HepG2 (cell line): ENCODE measurements at regions of chr9 and their contacts with region 1.

Region 1: DNA sequence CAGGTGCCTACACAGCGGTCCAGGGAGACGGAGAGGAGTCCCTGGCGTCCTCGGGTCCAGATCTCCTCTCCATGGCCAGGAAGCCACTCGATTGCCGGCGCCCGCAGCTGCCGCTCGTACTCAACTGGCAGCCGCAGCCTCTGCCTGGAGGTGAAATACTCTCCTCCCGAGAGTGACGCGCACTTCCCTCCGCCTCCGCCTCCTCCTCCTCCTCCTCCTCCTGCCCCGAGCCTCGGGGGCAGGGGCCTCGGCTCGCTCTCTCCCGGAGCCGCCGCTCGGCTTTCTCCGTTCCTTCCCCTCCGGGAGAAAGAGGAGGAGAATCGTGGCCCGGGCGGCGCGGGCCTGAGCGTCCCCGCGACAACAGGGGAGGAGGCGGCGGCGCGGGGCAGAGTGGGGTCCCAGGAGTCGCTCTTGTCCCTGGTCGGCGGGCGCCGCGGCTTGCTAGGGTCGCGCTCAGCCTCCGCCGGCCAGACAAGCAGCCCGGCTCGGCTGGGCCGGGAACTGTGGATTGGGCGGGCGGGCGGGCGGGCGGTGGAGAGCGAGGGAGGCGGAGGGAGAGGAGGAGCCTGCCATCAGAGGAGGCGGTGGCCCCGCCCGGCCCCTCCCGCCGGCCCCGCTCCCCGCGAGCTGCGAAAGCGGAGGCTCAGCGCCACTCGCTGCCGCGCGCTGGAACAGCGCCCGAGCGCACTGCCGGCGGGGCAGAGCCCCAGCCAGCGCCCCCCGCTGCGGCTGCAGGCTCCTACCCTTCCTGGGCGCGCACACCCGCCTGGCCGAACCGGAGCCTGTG is at the start of gene CEMIP2:
- DNase-seq: peak; percentile 71
- ATAC-seq: peak; percentile 87
- H3K4me3 ChIP-seq: peak within 1 kb of the TSS; percentile 90 to 99 (median 98)
- H3K27ac ChIP-seq: peak within 1 kb of the TSS; percentile 92
- H3K4me1 ChIP-seq: peaks cover 31% of the 10 kb centered on the region
- H3K27me3 ChIP-seq: peaks cover 0 to 12% of the 10 kb centered on the region in 2 experiments; a peak in 1 of 5 replicates
- CTCF ChIP-seq: peak; percentile 73
- EP300 ChIP-seq: no peak; a peak in 1 of 4 replicates
- POLR2A ChIP-seq: peak; percentile 97 to 98
- RAD21 ChIP-seq: peak; percentile 94
- total RNA-seq, gene CEMIP2: 52.7 and 94.3 TPM in 2 replicates

Region 2: GRCh38 chr9:71604197-71605063 is 164.2 kb before region 1 on chr9:
- CTCF ChIA-PET with region 1: interaction called, 25 read pairs
- POLR2A ChIA-PET with region 1: interaction called, 3 read pairs
- in situ Hi-C with region 1: no loop called
- intact Hi-C with region 1: loop called (anchors 1 kb)
- DNase-seq: peak; percentile 64
- ATAC-seq: peak; percentile 92
- H3K4me3 ChIP-seq: no peak overlapping the region
- H3K27ac ChIP-seq: no peak overlapping the region
- H3K4me1 ChIP-seq: peaks cover 11% of the 10 kb centered on the region
- H3K27me3 ChIP-seq: no peaks in the 10 kb centered on the region
- CTCF ChIP-seq: peak; percentile 86
- EP300 ChIP-seq: no peak
- POLR2A ChIP-seq: no peak
- RAD21 ChIP-seq: peak; percentile 74

Region 3: DNA sequence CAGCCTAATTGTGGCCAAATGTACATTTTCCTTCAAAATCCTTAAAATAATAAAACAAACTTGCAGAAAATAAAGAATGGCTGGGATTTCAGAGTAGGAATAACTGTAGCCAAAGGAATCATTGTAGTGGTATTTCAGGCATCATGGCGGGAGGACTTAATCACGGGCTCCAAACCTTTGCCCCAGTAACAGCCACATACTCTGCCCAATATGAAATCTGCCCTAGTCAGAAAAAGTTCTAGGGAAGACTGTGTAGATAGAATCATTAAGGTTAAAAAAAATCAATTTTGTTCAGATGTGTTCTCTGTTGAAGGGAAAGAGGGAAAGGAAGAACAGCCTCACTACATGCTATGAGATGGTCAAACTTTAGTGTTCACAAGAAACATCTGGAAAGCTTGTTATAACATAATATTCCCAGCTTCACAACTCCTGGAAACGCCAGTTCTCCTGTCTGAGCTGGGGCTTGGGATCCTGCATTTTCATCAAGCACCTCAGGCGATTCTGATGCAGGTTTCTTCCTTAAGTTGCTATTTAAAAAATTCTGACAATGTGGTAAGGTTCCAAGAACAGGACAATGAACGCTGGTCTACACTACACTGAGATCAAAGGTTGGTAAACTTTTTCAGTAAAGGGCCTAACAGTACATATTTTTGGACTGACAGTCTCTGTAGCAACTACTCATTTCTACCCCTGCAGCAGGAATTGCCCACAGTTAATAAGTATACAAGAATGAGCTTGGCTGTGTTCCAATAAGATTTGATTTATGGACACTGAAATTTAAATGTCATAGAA is 88.2 kb before region 1 on chr9:
- CTCF ChIA-PET with region 1: no interaction called
- POLR2A ChIA-PET with region 1: interaction called, 13 read pairs
- in situ Hi-C with region 1: no loop called
- intact Hi-C with region 1: loop called (anchors 2 kb)
- DNase-seq: peak; percentile 90
- ATAC-seq: peak; percentile 76
- H3K4me3 ChIP-seq: peak overlapping the region in 1 of 3 experiments; percentile 19; a peak in 1 of 6 replicates
- H3K27ac ChIP-seq: peak overlapping the region; percentile 94
- H3K4me1 ChIP-seq: peaks cover 74% of the 10 kb centered on the region
- H3K27me3 ChIP-seq: no peaks in the 10 kb centered on the region
- CTCF ChIP-seq: no peak
- EP300 ChIP-seq: peak; percentile 15 to 67; a peak in 2 of 4 replicates
- POLR2A ChIP-seq: no peak
- RAD21 ChIP-seq: no peak

Region 4: GRCh38 chr9:71725590-71726338 is 42.8 kb before region 1 on chr9:
- CTCF ChIA-PET with region 1: interaction called, 3 read pairs
- POLR2A ChIA-PET with region 1: interaction called, 9 read pairs
- in situ Hi-C with region 1: loop called (anchors 5 kb)
- intact Hi-C with region 1: loop called (anchors 1 kb)
- DNase-seq: peak; percentile 95
- ATAC-seq: peak; percentile 98
- H3K4me3 ChIP-seq: no peak overlapping the region
- H3K27ac ChIP-seq: peak overlapping the region; percentile 62
- H3K4me1 ChIP-seq: peaks cover 48% of the 10 kb centered on the region
- H3K27me3 ChIP-seq: no peaks in the 10 kb centered on the region
- CTCF ChIP-seq: no peak
- EP300 ChIP-seq: peak; percentile 69 to 95; a peak in 3 of 4 replicates
- POLR2A ChIP-seq: no peak
- RAD21 ChIP-seq: no peak